Posterior cingulate gyrus (tissue), 11 donors: ENCODE measurements at regions of chr16 and their contacts with region 1.

Region 1: GRCh38 chr16:81723098-81723723 is 55.9 kb upstream of the PLCG2 start:
- DNase-seq: peak in 1 of 10 donors; percentile 32

Region 2: DNA sequence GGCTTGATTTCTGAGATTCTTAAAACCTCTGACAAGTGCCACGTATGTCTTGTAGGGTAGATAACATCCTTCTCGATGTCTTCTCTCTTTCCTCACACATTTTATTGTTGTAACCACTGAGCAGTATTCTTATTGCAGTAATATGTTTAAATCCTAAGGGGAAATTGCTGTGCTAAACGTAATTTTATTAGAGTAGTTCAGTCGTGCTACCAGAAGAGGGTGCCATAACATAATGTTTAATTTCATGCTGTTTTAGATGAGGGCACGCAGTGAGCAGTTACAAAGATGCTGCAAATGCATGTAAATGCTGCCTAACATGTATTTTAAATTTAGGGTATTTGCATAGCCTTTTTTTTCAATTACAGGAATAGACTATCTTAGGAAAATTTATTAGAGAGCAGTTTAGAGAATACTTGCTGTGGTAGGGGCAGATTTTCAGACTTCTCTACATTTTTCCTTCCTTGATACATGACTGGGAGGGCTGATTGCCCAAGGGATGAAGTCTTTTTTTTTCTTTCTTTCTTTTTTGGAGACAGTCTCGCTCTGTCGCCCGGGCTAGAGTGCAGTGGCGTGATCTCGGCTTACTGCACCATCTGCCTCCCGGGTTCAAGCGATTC is 356.8 kb before region 1 on chr16:
- intact Hi-C with region 1: loop called (anchors 1 kb)
- DNase-seq: no peak

Region 3: DNA sequence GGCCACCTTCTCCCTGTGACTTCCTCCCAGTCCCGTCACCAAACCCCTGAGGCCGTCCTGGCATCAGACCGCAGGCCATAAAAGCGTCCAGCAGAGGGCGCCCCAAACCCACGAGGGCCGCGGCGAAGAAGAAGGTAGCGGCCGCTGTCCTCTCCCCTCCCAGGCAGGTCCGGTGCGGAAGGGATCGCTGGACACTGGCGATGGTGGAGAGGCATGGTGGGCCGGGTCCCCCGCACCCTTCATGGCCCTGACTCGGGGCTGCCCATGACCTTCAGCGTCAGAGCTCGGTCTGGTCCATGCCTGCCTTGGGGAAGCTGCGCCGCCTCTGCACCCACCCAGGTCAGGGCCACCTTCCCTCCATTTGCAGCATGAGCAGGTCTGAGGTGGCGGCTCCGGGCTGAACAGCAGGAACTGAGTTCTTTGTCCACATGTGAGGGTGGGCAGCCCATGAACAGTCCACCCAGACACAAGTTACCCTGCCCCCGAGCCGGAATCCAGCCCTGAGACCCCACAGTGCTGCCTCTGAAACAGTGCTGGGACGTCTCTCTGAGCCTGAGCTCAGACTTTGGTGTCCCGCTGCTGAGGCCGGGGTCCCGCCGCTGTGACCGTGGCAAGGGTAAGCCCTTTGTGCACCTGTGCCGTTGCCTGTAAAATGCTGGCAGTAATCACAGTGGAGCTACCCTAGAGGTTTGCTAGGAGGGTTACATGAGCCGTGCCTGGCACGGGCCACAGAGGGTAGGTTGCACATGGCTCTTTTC is 319.4 kb before region 1 on chr16:
- intact Hi-C with region 1: loop called (anchors 1 kb)
- DNase-seq: peak; percentile 59 to 97 (median 86)

Region 4: GRCh38 chr16:81623363-81624102 is 99.7 kb before region 1 on chr16:
- intact Hi-C with region 1: loop called (anchors 2 kb)
- DNase-seq: peak in 6 of 10 donors; percentile 22 to 64 (median 58)